ENCODE measurements at regions of chr20 and their contacts with region 1.

Region 1: GRCh38 chr20:20083807-20084206 is 31.5 kb downstream of the CFAP61 start:
- DNase-seq: no peak
- H3K4me3 ChIP-seq: no peak overlapping the region
- H3K27ac ChIP-seq: no peak overlapping the region
- H3K4me1 ChIP-seq: peaks cover 11 to 34% of the 10 kb centered on the region in 2 donors
- H3K27me3 ChIP-seq: no peaks in the 10 kb centered on the region
- CTCF ChIP-seq: peak in 5 of 6 experiments; percentile 23 to 74 (median 52)
- POLR2A ChIP-seq: no peak

Region 2: DNA sequence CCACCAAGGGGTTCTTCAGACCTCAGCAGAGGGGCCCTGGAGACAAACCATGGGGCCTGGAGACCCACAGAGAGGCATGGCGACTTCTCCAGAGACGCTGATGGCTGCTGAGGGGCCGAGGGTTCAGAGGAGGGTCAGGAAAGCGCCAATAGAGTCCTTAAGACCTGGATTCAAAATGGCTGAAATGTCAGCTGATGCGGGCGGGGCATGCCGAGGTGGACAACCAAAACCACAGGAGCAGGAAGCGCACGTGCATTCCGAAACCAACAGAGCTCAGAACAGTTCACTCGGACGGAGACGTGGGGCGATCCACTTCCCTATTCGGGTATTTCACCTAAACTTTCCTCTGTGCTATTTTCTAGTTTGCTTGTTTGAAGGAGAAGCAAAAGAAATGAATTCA is 425.7 kb before region 1 on chr20:
- intact Hi-C with region 1: no loop called
- DNase-seq: no peak
- H3K4me3 ChIP-seq: no peak overlapping the region
- H3K27ac ChIP-seq: no peak overlapping the region
- H3K4me1 ChIP-seq: peaks cover 7 to 13% of the 10 kb centered on the region in 2 donors
- H3K27me3 ChIP-seq: no peaks in the 10 kb centered on the region
- CTCF ChIP-seq: no peak
- POLR2A ChIP-seq: no peak

Region 3: DNA sequence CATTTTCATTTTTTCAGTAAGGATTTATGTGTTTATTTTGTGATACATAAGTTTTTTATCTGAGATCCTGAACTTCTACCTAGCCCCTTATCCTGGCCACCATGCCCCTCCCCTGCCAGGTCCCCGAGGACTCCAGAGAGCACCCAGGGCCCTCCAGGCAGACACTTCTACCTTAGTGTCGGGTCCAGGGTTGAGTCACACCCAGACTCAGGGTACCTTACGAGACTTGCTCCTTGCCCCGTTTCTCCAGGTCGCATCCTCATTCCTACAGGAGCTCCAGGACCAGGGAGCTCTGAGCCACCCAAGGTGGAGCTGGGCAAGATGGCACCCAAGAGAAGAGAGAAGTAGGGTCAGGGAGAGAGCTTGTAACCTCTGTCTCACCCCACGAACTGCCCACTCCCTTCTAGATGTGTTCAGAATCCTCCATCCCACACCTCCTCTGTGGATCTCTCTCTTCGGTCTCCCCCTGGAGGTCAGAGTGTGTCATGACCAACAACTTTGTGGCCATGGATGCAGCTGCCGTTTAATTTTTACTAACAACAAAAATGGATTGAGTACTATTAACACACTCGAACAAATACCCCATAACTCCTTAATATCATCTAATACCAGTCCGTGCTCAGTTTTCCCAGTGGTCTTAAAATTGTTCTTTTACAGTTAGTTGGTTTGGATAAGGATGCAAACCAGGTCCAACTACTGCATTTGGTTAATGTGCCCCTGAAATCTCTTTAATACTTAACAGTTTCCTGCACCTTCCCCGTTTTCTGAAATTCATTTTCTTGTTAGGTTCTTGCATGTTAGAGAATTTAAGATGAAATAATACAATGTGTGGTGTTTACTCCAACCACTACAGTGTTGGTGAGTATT is 153.5 kb after region 1 on chr20:
- intact Hi-C with region 1: loop called (anchors 5 kb)
- DNase-seq: peak; percentile 46 to 64
- H3K4me3 ChIP-seq: no peak overlapping the region
- H3K27ac ChIP-seq: no peak overlapping the region
- H3K4me1 ChIP-seq: no peaks in the 10 kb centered on the region
- H3K27me3 ChIP-seq: no peaks in the 10 kb centered on the region
- CTCF ChIP-seq: peak; percentile 40 to 81 (median 72)
- POLR2A ChIP-seq: no peak